Activated CD4-positive, alpha-beta T cell treated with anti-CD3 and anti-CD28 coated beads for 36 hours (primary cell): ENCODE measurements at regions of chr4 and their contacts with region 1.

Region 1: DNA sequence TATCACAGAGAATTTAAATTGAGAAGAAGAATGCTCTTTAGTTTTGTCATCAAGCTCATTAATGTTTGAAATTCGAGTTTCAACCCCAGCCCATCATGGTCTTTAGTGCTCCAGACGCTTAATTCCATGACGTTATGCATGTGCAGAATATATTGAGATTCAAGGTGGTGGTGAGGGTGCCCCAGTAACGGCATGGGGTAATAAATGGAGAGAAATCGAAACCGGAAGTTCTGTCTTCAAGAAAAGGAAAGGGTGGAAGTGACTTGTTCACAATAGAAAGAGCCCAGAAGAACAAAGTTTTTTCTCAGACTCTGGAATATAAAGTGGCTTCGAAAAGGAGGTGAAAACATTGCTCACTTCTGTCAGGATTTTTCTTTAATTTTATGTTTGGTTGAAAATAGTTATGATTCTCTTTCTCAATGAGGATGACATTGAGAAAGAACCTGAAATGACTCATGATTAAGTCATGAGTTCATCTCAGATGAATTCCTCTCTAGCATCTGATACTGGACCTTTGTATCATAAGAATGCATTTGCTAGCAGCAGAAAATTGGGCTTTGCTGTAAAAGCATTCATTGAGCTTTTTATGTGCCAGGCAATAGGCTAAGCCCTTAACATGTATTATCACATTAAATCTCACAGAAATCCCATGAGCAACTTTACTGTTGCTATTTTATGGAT is 779 bp upstream of the DDX60L start:
- DNase-seq: peak; percentile 51
- ATAC-seq: peak; percentile 66
- H3K4me3 Mint-ChIP-seq: peak overlapping the region; percentile 80
- H3K27ac Mint-ChIP-seq: peak overlapping the region; percentile 95
- H3K4me1 Mint-ChIP-seq: peaks cover 64% of the 10 kb centered on the region
- H3K27me3 Mint-ChIP-seq: no peaks in the 10 kb centered on the region

Region 2: DNA sequence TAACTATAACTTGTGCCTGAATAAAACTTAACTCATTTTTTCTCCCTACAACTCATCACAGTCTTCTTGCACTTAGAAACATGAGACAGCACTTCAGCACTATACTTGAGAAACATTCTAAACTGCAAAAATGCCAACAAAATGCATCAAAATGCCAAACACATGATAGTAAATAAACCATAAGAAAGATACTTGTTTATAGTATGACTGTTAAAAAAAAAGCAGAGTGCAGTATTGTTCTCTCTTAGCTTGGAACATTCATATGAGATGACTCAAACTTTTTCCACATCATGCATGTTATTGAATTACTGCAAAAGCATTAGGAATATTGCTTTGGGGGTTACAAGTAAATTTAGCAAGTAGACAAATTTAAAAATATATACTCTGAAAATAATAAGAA is 524.4 kb before region 1 on chr4:
- CTCF ChIA-PET with region 1: no interaction called
- POLR2A ChIA-PET with region 1: no interaction called
- intact Hi-C with region 1: no loop called
- DNase-seq: no peak
- ATAC-seq: no peak
- H3K4me3 Mint-ChIP-seq: no peak overlapping the region
- H3K27ac Mint-ChIP-seq: no peak overlapping the region
- H3K4me1 Mint-ChIP-seq: no peaks in the 10 kb centered on the region
- H3K27me3 Mint-ChIP-seq: no peaks in the 10 kb centered on the region

Region 3: DNA sequence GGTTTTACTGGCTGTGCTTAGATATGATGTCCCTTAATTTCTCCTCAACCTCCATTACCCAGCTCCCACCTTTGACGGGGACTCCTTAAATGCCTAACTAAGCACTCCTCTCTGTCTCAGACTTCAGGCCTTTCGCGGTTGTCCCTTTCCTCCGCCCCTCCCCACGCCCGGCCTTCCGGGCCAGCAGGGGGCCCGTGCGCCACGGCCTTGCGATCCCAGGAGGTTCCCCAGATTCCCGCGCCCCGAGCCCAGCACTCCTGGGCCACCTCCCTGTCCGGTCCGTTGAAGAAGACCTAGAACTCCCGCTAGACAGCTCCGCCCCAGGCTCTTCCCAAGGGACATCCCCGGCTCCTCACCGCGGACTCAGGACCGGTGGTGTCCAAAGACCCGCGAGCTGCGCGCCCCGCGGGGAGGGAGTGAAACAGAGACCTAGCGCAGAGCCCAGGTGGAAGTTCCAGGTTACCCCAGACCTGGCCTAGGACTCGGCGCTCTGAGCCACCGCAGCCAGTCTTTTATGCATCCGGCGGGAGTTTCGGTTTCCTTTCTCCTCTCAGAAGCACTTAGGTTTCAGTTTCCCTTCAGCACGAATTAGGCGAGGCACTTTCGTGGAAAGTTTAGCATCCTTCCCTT is 162.7 kb before region 1 on chr4 and contains the start of gene DDX60:
- CTCF ChIA-PET with region 1: no interaction called
- POLR2A ChIA-PET with region 1: no interaction called
- intact Hi-C with region 1: loop called (anchors 1 to 2 kb)
- DNase-seq: peak; percentile 91
- ATAC-seq: peak; percentile 93
- H3K4me3 Mint-ChIP-seq: peak within 1 kb of the TSS; percentile 85
- H3K27ac Mint-ChIP-seq: peak within 1 kb of the TSS; percentile 92
- H3K4me1 Mint-ChIP-seq: peaks cover 44% of the 10 kb centered on the region
- H3K27me3 Mint-ChIP-seq: no peaks in the 10 kb centered on the region
- total RNA-seq, gene DDX60: 22.2 to 23.8 TPM

Region 4: DNA sequence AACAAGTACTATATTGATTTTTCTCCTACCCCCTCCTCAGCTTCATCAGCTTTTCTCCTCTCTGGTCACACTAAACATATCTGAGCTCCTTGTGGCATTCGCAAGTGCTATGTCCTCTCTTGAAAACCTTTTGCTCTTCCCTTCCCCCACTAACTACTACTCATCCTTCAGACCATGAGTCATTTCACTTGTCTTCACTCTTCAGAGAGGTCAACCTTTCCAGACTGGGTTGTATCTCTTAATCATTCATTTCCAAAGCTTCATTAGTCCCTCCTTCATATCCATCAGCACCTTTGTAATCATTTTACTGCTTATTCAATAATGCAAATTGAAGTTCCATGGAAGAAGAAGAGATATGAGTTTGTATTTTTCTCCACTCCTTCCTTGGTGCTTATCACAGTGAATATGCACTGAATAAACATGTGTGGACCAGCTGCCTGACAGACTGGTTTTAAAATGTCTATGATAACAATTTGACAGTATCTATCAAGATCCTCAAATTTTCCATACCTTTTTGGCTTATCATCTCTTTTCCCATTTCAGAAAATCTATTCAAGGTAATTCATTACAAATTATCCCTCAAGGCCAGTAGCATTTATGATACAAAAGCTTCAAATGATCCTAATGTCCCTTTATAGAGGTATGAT is 29.2 kb before region 1 on chr4:
- CTCF ChIA-PET with region 1: no interaction called
- POLR2A ChIA-PET with region 1: no interaction called
- intact Hi-C with region 1: loop called (anchors 1 kb)
- DNase-seq: no peak
- ATAC-seq: peak; percentile 89
- H3K4me3 Mint-ChIP-seq: no peak overlapping the region
- H3K27ac Mint-ChIP-seq: peak overlapping the region; percentile 79
- H3K4me1 Mint-ChIP-seq: peaks cover 32% of the 10 kb centered on the region
- H3K27me3 Mint-ChIP-seq: no peaks in the 10 kb centered on the region

Region 5: DNA sequence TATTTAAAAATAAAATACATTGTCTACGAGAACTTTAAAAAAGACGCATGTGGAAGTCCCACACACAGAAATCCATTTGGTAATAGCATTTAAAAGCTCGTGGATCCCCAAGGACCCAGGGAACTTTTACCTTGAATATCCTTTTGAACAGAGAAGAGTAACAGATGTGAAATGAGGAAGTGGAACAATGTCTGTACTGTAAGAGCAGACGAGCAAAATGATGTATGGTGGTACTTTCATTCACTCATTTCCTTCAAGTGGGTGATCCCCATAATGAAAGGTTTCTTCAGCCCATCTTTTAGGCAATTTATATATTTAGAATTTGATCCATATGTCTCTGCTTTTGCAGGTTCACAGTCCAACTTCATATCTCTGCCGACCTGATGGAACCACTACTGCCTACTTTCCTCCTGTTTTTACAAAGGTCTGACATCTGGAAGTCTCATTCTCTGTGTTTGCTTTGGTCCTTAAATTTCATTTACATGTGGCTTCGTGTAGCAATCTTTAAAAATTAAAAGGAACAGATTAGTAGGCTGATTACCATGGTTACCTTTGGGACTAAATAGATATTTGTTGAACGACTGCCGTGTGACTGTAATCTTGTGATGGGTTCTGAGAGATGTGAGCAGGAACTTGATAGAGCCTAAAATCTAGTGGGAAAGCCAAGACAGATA is 204.2 kb after region 1 on chr4:
- CTCF ChIA-PET with region 1: no interaction called
- POLR2A ChIA-PET with region 1: no interaction called
- intact Hi-C with region 1: no loop called
- DNase-seq: no peak
- ATAC-seq: no peak
- H3K4me3 Mint-ChIP-seq: no peak overlapping the region
- H3K27ac Mint-ChIP-seq: no peak overlapping the region
- H3K4me1 Mint-ChIP-seq: no peaks in the 10 kb centered on the region
- H3K27me3 Mint-ChIP-seq: peaks cover 2% of the 10 kb centered on the region

Region 6: GRCh38 chr4:169619959-169620879 is 1139.1 kb after region 1 on chr4 and contains the start of gene CLCN3:
- CTCF ChIA-PET with region 1: interaction called, 4 read pairs
- POLR2A ChIA-PET with region 1: no interaction called
- intact Hi-C with region 1: loop called in 1 of 2 experiments (anchors 10 kb)
- DNase-seq: peak; percentile 93
- ATAC-seq: peak; percentile 72
- H3K4me3 Mint-ChIP-seq: peak within 1 kb of the TSS; percentile 93
- H3K27ac Mint-ChIP-seq: peak within 1 kb of the TSS; percentile 100
- H3K4me1 Mint-ChIP-seq: peaks cover 56% of the 10 kb centered on the region
- H3K27me3 Mint-ChIP-seq: no peaks in the 10 kb centered on the region
- total RNA-seq, gene CLCN3: 21.2 to 22.0 TPM